MCF 10A (cell line): ENCODE measurements at regions of chr14 and their contacts with region 1.

Region 1: GRCh38 chr14:53539489-53540126 is 386.5 kb upstream of the DDHD1 start:
- DNase-seq: peak; percentile 81
- H3K4me3 Mint-ChIP-seq: no peak overlapping the region
- H3K27ac Mint-ChIP-seq: no peak overlapping the region
- H3K4me1 Mint-ChIP-seq: peaks cover 12% of the 10 kb centered on the region
- H3K27me3 Mint-ChIP-seq: no peaks in the 10 kb centered on the region
- CTCF ChIP-seq: peak; percentile 83

Region 2: DNA sequence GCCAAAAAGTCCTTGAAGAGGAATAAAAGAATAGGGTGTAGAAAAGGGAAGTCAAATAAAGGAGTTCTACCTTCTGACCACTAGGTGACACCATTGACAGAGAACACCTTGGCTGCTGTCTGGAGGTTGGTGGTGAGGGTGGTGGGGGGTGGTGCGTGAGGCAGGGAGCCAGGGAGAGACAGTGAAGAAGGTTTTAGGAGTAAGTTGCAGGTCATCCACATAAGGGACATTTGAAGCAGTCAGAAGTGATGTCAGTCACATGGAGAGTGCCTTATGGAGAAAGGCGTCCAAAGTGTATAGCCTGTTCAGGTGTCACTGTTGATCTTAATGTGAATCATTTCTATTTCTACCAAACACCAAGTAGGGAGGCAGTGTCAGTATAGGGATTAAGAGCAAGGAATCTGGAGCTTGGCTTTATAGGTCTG is 107.2 kb before region 1 on chr14:
- CTCF ChIA-PET with region 1: interaction called, 17 read pairs
- POLR2A ChIA-PET with region 1: no interaction called
- intact Hi-C with region 1: loop called (anchors 2 kb)
- DNase-seq: peak; percentile 56
- H3K4me3 Mint-ChIP-seq: no peak overlapping the region
- H3K27ac Mint-ChIP-seq: no peak overlapping the region
- H3K4me1 Mint-ChIP-seq: no peaks in the 10 kb centered on the region
- H3K27me3 Mint-ChIP-seq: no peaks in the 10 kb centered on the region
- CTCF ChIP-seq: peak; percentile 68

Region 3: DNA sequence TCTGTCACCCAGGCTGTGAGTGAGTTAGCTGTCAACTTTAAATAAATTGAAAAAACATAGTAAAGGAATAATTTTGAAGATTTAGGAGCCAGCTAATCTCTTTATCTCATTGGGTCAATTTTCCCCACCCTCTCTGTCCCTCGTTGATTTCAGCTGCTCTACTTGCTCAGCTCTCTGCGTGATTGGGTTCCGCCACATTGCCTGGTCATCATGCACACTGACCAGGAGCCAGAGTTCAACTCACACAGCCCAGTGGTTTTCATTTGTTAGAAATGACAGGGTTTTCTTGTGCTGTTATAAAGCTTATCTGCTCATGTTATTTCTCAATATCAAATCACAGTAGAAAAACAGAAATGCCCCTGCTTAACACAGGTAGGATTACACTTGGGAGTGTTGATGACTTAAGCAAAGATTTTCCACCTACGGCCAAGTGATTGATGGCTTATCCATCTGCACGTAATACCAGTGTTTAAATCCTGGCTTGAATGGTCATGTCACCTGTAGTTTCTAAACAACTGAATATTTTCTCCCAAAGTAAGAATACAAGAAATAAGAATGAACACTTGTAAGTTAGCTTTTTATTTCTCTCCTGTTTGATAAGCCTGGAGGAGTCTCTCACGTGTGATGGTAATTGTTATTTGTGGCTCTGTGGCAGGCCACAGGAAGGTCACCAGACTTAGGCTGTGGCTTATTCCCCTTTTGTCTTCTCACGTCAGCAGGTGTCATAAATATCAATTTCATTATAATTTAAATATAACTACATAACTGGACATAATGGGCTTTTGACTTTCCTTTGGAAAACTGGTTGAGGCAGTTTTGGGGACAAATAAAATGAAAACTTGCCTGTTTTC is 19.3 kb before region 1 on chr14:
- CTCF ChIA-PET with region 1: interaction called, 11 read pairs
- POLR2A ChIA-PET with region 1: no interaction called
- intact Hi-C with region 1: no loop called
- DNase-seq: no peak
- H3K4me3 Mint-ChIP-seq: no peak overlapping the region
- H3K27ac Mint-ChIP-seq: no peak overlapping the region
- H3K4me1 Mint-ChIP-seq: peaks cover 4% of the 10 kb centered on the region
- H3K27me3 Mint-ChIP-seq: no peaks in the 10 kb centered on the region
- CTCF ChIP-seq: no peak

Region 4: GRCh38 chr14:53929871-53930715 is 390.5 kb after region 1 on chr14:
- CTCF ChIA-PET with region 1: no interaction called
- POLR2A ChIA-PET with region 1: no interaction called
- intact Hi-C with region 1: loop called (anchors 10 kb)
- DNase-seq: peak; percentile 48
- H3K4me3 Mint-ChIP-seq: no peak overlapping the region
- H3K27ac Mint-ChIP-seq: no peak overlapping the region
- H3K4me1 Mint-ChIP-seq: peaks cover 15% of the 10 kb centered on the region
- H3K27me3 Mint-ChIP-seq: no peaks in the 10 kb centered on the region
- CTCF ChIP-seq: peak; percentile 44

Region 5: DNA sequence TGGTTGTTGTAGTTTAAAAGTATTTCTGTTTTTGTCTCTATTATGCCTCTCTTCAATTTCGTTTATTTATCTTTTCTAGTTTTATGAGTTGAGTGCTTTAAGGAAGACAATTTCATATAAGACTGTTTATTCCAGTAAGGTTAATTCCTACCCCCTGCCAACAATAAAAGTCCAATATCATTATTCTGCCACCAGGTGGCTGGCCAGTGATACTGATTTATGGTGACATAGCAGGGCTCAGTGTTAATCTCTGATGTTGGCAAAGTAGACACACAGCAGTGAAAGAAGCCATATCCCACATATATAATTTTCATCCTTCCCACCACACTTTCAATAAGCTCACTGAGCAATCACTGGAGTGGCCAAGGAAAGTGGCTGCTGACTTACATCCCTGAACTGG is 486.1 kb after region 1 on chr14:
- CTCF ChIA-PET with region 1: interaction called, 7 read pairs
- POLR2A ChIA-PET with region 1: no interaction called
- intact Hi-C with region 1: loop called (anchors 2 kb)
- DNase-seq: peak; percentile 65
- H3K4me3 Mint-ChIP-seq: no peak overlapping the region
- H3K27ac Mint-ChIP-seq: no peak overlapping the region
- H3K4me1 Mint-ChIP-seq: no peaks in the 10 kb centered on the region
- H3K27me3 Mint-ChIP-seq: no peaks in the 10 kb centered on the region
- CTCF ChIP-seq: peak; percentile 36

Region 6: GRCh38 chr14:54329082-54329695 is 789.6 kb after region 1 on chr14:
- CTCF ChIA-PET with region 1: interaction called, 18 read pairs
- POLR2A ChIA-PET with region 1: no interaction called
- intact Hi-C with region 1: loop called (anchors 1 kb)
- DNase-seq: peak; percentile 74
- H3K4me3 Mint-ChIP-seq: no peak overlapping the region
- H3K27ac Mint-ChIP-seq: no peak overlapping the region
- H3K4me1 Mint-ChIP-seq: peaks cover 6% of the 10 kb centered on the region
- H3K27me3 Mint-ChIP-seq: no peaks in the 10 kb centered on the region
- CTCF ChIP-seq: peak; percentile 88

Region 7: GRCh38 chr14:54347997-54348611 is 808.5 kb after region 1 on chr14:
- CTCF ChIA-PET with region 1: interaction called, 30 read pairs
- POLR2A ChIA-PET with region 1: interaction called, 3 read pairs
- intact Hi-C with region 1: no loop called
- DNase-seq: peak; percentile 68
- H3K4me3 Mint-ChIP-seq: no peak overlapping the region
- H3K27ac Mint-ChIP-seq: no peak overlapping the region
- H3K4me1 Mint-ChIP-seq: peaks cover 6% of the 10 kb centered on the region
- H3K27me3 Mint-ChIP-seq: no peaks in the 10 kb centered on the region
- CTCF ChIP-seq: peak; percentile 82